ENCODE measurements at regions of chr18 and their contacts with region 1.

Region 1: DNA sequence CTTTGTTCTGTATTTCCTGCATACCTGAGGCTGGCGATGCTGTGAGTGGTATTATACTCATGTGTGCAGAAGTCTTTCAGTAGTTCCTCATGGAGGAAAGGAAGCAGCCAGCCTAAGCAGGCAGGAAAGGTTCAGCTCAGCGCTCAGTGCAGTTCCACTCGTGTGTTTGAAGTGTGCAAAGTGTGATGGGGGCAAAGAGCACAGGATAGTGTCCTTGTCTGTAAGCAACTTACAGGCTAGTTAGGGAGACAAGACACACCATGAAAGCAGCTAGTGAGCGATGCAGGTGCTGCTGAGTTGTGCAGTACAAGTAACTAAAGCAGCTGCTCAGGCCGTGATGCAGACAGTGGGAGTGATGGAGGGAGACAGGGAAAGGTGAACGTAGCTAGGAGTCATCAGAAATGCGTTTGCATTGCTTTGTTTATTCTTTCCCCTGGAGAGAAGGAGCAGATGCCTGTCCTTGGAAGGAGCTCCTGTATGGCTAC is 146.2 kb downstream of the LDLRAD4 start:
- DNase-seq: no peak
- CTCF ChIP-seq: no peak

Region 2: GRCh38 chr18:12768625-12769024 is 596.1 kb before region 1 on chr18:
- CTCF ChIA-PET with region 1: no interaction called
- POLR2A ChIA-PET with region 1: no interaction called
- DNase-seq: no peak
- CTCF ChIP-seq: no peak

Region 3: DNA sequence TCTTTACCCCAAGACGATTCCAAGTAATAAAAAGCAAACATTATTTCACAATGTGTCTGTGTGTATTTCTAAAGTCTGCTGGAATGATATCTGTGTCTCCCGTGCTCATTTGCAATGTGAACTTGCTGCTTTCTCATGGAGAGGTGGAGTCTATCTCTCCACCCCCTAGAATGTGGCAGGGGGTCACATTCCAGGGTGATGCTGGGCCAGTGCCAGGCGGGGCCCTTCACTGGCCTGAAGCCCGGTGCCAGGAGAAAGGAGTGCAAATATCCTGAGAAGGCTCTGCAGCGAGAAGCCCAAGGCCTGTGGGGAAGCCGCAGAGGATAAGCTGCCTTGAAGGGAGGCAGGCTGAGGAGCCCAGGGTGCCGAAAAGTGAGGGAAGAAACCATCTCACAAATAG is 173.0 kb before region 1 on chr18:
- CTCF ChIA-PET with region 1: no interaction called
- POLR2A ChIA-PET with region 1: no interaction called
- DNase-seq: no peak
- CTCF ChIP-seq: no peak

Region 4: GRCh38 chr18:13216092-13216582 is 148.6 kb before region 1 on chr18:
- CTCF ChIA-PET with region 1: no interaction called
- POLR2A ChIA-PET with region 1: no interaction called
- DNase-seq: peak; percentile 55
- CTCF ChIP-seq: peak; percentile 52

Region 5: DNA sequence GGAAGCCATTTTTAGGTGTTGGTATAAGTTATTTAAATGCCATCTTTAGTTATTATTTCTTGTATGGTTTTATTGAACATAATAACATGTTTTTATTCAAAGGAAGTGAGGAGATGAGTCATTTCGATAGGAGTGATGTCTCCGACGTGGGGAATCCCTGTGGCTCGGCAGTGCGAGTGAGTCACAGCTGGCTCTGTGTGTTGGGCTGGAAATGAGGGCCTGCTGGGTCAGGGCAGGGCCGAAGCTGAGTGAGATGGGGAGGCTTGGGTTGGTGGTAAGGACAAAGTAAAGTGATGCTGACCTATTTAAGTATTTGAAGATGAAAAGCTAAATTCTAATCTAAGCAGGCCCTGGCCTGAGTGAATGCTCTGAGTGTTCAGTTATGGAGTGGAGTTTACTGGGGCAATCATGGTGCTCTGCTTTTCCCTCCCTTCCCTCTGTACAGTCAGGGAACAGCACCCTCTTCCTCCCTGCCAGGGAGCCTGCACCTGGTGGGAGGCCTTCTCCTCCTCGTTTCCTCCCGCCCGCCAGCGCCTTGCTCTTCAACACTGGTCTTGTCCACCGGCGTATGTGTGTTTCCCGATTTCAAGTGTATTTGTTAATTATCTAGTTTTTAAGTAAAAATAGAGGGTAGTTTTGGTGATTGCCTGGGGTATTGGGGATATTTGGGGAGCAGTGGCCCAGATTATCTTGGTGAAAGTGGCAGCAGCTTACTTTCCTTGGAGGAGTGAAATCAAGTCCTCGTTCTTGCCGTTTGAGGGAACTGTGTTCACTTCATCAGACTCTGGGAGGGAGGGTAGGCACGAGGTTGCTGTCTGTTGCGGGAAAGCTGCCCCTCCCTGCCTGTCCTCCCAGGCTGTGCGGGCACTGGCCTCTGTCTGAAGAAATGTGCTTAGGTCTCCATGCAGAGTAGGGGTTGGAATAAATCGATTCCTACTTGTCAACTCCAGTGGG is 10.8 kb after region 1 on chr18:
- CTCF ChIA-PET with region 1: interaction called, 12 read pairs
- POLR2A ChIA-PET with region 1: interaction called, 3 read pairs
- DNase-seq: peak; percentile 84
- CTCF ChIP-seq: no peak